HEK293 (cell line): ENCODE measurements at regions of chr6 and their contacts with region 1.

Region 1: GRCh38 chr6:21134356-21134755 is 459.2 kb upstream of the SOX4 start:
- H3K4me3 ChIP-seq: no peak overlapping the region
- H3K27ac ChIP-seq: no peak overlapping the region
- H3K4me1 ChIP-seq: peaks cover 8% of the 10 kb centered on the region
- CTCF ChIP-seq: no peak

Region 2: GRCh38 chr6:21149470-21149869 is 15.1 kb after region 1 on chr6:
- CTCF ChIA-PET with region 1: interaction called, 11 read pairs
- POLR2A ChIA-PET with region 1: no interaction called
- H3K4me3 ChIP-seq: no peak overlapping the region
- H3K27ac ChIP-seq: no peak overlapping the region
- H3K4me1 ChIP-seq: no peaks in the 10 kb centered on the region; the same call in 1 of the 2 replicates
- CTCF ChIP-seq: no peak